Panc1 (cell line): ENCODE measurements at regions of chr10 and their contacts with region 1.

Region 1: DNA sequence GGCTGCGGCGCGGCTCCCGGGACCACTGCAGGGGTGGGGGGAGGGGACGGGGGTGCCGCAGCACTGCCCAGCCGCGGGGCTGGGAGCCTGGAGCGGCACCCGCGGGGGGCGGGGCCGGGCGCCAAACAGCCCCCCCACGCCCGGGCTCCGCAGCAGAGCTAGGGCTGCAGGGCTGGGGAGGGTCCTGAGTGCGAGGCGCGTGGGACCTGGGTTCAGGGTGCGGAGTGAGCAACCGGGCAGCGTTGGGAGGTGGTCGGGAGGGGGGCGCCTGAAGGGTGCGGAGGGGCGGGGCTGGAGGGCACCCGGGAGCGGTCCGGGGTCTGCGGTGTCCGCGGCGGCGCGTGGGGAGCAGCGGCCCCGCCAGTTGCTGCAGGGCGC is 528 bp downstream of the CAMK2G start:
- DNase-seq: no peak
- ATAC-seq: peak; percentile 3
- H3K4me3 ChIP-seq: peak overlapping the region; percentile 47 to 56
- H3K27ac ChIP-seq: no peak overlapping the region
- H3K4me1 ChIP-seq: peaks cover 27% of the 10 kb centered on the region
- H3K27me3 ChIP-seq: no peaks in the 10 kb centered on the region
- CTCF ChIP-seq: no peak

Region 2: GRCh38 chr10:73601486-73601921 is 272.3 kb before region 1 on chr10:
- CTCF ChIA-PET with region 1: interaction called, 12 read pairs
- POLR2A ChIA-PET with region 1: no interaction called
- in situ Hi-C with region 1: no loop called
- intact Hi-C with region 1: no loop called
- DNase-seq: no peak
- ATAC-seq: peak; percentile 68
- H3K4me3 ChIP-seq: no peak overlapping the region
- H3K27ac ChIP-seq: peak overlapping the region; percentile 12; the same call in 1 of the 2 replicates
- H3K4me1 ChIP-seq: peaks cover 8% of the 10 kb centered on the region; the same call in 1 of the 2 replicates
- H3K27me3 ChIP-seq: no peaks in the 10 kb centered on the region
- CTCF ChIP-seq: no peak